ENCODE measurements at regions of chr17 and their contacts with region 1.

Region 1: GRCh38 chr17:64320613-64321553 is 57.8 kb upstream of the TEX2 start:
- DNase-seq: peak; percentile 98
- ATAC-seq: peak; percentile 82
- H3K4me3 ChIP-seq: no peak overlapping the region
- H3K27ac ChIP-seq: peak overlapping the region; percentile 56
- H3K4me1 ChIP-seq: peaks cover 12% of the 10 kb centered on the region
- H3K27me3 ChIP-seq: no peaks in the 10 kb centered on the region
- CTCF ChIP-seq: peak; percentile 96

Region 2: GRCh38 chr17:64385187-64386083 is 64.6 kb after region 1 on chr17:
- CTCF ChIA-PET with region 1: no interaction called
- POLR2A ChIA-PET with region 1: no interaction called
- intact Hi-C with region 1: loop called (anchors 1 kb)
- DNase-seq: peak; percentile 98
- ATAC-seq: peak; percentile 73
- H3K4me3 ChIP-seq: peak overlapping the region; percentile 68
- H3K27ac ChIP-seq: peak overlapping the region; percentile 94
- H3K4me1 ChIP-seq: peaks cover 66% of the 10 kb centered on the region
- H3K27me3 ChIP-seq: no peaks in the 10 kb centered on the region
- CTCF ChIP-seq: no peak; the same call in 1 of the 2 replicates

Region 3: GRCh38 chr17:64399071-64399766 is 78.3 kb after region 1 on chr17:
- CTCF ChIA-PET with region 1: interaction called, 11 read pairs
- POLR2A ChIA-PET with region 1: no interaction called
- intact Hi-C with region 1: no loop called
- DNase-seq: peak; percentile 82
- ATAC-seq: peak; percentile 63
- H3K4me3 ChIP-seq: no peak overlapping the region
- H3K27ac ChIP-seq: peak overlapping the region; percentile 35; the same call in 1 of the 2 replicates
- H3K4me1 ChIP-seq: peaks cover 30% of the 10 kb centered on the region
- H3K27me3 ChIP-seq: no peaks in the 10 kb centered on the region
- CTCF ChIP-seq: no peak

Measured in PC-3 (cell line).